ENCODE measurements at regions of chr15 and their contacts with region 1.

Region 1: GRCh38 chr15:59104912-59105732 is at the start of gene CCNB2:
- DNase-seq: peak; percentile 85
- ATAC-seq: peak; percentile 100
- H3K4me3 ChIP-seq: peak within 1 kb of the TSS; percentile 95
- H3K27ac ChIP-seq: peak within 1 kb of the TSS; percentile 86
- H3K4me1 ChIP-seq: peaks cover 4% of the 10 kb centered on the region; the same call in 1 of the 2 replicates
- H3K27me3 ChIP-seq: no peaks in the 10 kb centered on the region
- CTCF ChIP-seq: no peak
- EP300 ChIP-seq: no peak
- POLR2A ChIP-seq: peak; percentile 98
- RAD21 ChIP-seq: no peak
- polyA plus RNA-seq, gene CCNB2: 205 to 211 TPM

Region 2: GRCh38 chr15:58957101-58957973 is 147.8 kb before region 1 on chr15:
- CTCF ChIA-PET with region 1: interaction called, 13 read pairs
- POLR2A ChIA-PET with region 1: no interaction called
- RAD21 ChIA-PET with region 1: no interaction called
- SMC1A ChIA-PET with region 1: no interaction called
- in situ Hi-C with region 1: no loop called
- intact Hi-C with region 1: no loop called
- DNase-seq: no peak
- ATAC-seq: peak; percentile 98
- H3K4me3 ChIP-seq: no peak overlapping the region
- H3K27ac ChIP-seq: no peak overlapping the region
- H3K4me1 ChIP-seq: peaks cover 11% of the 10 kb centered on the region
- H3K27me3 ChIP-seq: no peaks in the 10 kb centered on the region
- CTCF ChIP-seq: peak; percentile 79 to 87 (median 81)
- EP300 ChIP-seq: no peak
- POLR2A ChIP-seq: no peak
- RAD21 ChIP-seq: peak; percentile 82

Region 3: DNA sequence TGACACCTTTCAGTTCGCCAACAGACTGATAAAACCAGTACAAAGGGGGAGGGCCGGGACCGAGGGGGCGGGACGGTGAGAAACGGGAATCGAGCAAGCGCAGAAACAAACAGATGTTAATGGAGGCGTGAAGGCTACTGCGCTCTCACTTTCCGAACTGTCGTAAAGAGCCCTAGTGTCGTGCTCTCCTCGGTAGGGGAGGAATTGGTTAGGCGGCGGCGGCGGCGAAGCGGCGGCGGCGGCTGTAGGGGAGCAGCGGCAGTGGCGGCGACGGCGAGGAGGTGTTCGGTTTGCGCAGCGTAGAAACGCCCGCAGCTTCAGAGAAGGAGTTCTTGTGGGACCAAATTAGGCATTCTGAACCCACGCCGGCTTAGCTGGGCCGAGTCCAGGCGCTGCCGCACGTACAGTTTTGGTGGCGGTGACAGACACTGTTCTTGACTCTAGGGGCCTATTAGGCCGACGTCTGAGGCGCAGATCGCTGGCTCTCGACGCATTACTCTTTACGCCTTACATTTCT is 117.6 kb before region 1 on chr15 and contains the start of gene RNF111:
- CTCF ChIA-PET with region 1: no interaction called
- POLR2A ChIA-PET with region 1: no interaction called
- RAD21 ChIA-PET with region 1: interaction called, 3 read pairs
- SMC1A ChIA-PET with region 1: interaction called, 4 read pairs
- in situ Hi-C with region 1: no loop called
- intact Hi-C with region 1: loop called (anchors 2 kb)
- DNase-seq: peak; percentile 90
- ATAC-seq: peak; percentile 90
- H3K4me3 ChIP-seq: peak within 1 kb of the TSS; percentile 75
- H3K27ac ChIP-seq: peak within 1 kb of the TSS; percentile 92
- H3K4me1 ChIP-seq: no peaks in the 10 kb centered on the region
- H3K27me3 ChIP-seq: no peaks in the 10 kb centered on the region
- CTCF ChIP-seq: no peak
- EP300 ChIP-seq: no peak
- POLR2A ChIP-seq: peak; percentile 76
- RAD21 ChIP-seq: no peak
- polyA plus RNA-seq, gene RNF111: 8.6 TPM

Region 4: DNA sequence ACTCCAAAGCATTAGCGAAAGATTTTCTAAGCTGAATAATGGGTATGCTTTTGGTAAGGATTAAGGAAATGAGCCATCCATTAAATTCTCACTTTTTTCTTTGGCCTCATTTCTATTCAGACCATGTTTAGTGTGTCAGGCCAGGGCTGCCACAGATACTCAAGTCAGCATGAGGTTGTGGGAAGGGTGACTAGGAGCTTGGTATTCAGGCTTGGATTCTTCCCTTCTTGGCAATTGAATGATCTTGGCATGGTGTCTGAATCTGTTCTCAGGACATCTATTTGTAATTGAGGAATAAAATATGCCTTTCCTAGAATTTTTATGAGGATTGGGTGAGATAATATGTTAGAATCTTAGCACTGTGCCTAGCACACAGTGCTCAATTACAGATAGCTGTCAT is 11.0 kb after region 1 on chr15:
- CTCF ChIA-PET with region 1: interaction called, 7 read pairs
- POLR2A ChIA-PET with region 1: interaction called, 5 read pairs
- RAD21 ChIA-PET with region 1: no interaction called
- SMC1A ChIA-PET with region 1: interaction called, 11 read pairs
- in situ Hi-C with region 1: no loop called
- intact Hi-C with region 1: no loop called
- DNase-seq: no peak
- ATAC-seq: no peak
- H3K4me3 ChIP-seq: no peak overlapping the region
- H3K27ac ChIP-seq: no peak overlapping the region
- H3K4me1 ChIP-seq: no peaks in the 10 kb centered on the region
- H3K27me3 ChIP-seq: no peaks in the 10 kb centered on the region
- CTCF ChIP-seq: no peak
- EP300 ChIP-seq: no peak
- POLR2A ChIP-seq: no peak
- RAD21 ChIP-seq: no peak

Region 5: GRCh38 chr15:59124261-59124660 is 19.1 kb after region 1 on chr15:
- CTCF ChIA-PET with region 1: interaction called, 7 read pairs
- POLR2A ChIA-PET with region 1: interaction called, 3 read pairs
- RAD21 ChIA-PET with region 1: no interaction called
- SMC1A ChIA-PET with region 1: interaction called, 10 read pairs
- in situ Hi-C with region 1: no loop called
- intact Hi-C with region 1: no loop called
- DNase-seq: no peak
- ATAC-seq: no peak
- H3K4me3 ChIP-seq: no peak overlapping the region
- H3K27ac ChIP-seq: no peak overlapping the region
- H3K4me1 ChIP-seq: no peaks in the 10 kb centered on the region
- H3K27me3 ChIP-seq: no peaks in the 10 kb centered on the region
- CTCF ChIP-seq: no peak
- EP300 ChIP-seq: no peak
- POLR2A ChIP-seq: no peak
- RAD21 ChIP-seq: no peak

Region 6: DNA sequence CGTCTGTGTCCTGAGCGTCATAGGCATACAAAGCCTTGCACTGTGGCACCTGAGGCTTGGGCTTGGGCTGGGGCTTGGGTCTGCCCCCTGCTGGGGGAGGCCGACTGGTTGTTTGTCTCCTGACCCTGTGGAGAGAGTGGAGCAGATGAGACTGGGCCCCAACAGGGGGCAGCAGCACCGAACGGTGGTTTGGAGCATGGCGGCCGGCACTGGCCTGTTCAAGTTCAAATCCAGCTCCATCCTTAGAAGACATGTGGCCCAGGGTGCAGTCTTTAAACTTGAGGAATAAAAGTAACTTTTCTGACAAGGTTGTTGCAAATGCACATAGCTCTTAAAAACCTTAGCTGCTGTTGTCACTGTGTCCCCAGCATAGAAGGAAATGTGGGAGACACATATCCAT is 33.1 kb after region 1 on chr15:
- CTCF ChIA-PET with region 1: interaction called, 10 read pairs
- POLR2A ChIA-PET with region 1: no interaction called
- RAD21 ChIA-PET with region 1: interaction called, 5 read pairs
- SMC1A ChIA-PET with region 1: no interaction called
- in situ Hi-C with region 1: no loop called
- intact Hi-C with region 1: no loop called
- DNase-seq: no peak
- ATAC-seq: peak; percentile 96
- H3K4me3 ChIP-seq: no peak overlapping the region
- H3K27ac ChIP-seq: no peak overlapping the region
- H3K4me1 ChIP-seq: peaks cover 6% of the 10 kb centered on the region
- H3K27me3 ChIP-seq: no peaks in the 10 kb centered on the region
- CTCF ChIP-seq: peak; percentile 77 to 85 (median 83)
- EP300 ChIP-seq: no peak
- POLR2A ChIP-seq: 0 out of 2 replicates have a peak, but pooled peaks have one; percentile 0
- RAD21 ChIP-seq: peak; percentile 44; the same call in 1 of the 2 replicates

Region 7: GRCh38 chr15:59170295-59171066 is 65.4 kb after region 1 on chr15:
- CTCF ChIA-PET with region 1: no interaction called
- POLR2A ChIA-PET with region 1: no interaction called
- RAD21 ChIA-PET with region 1: no interaction called
- SMC1A ChIA-PET with region 1: no interaction called
- in situ Hi-C with region 1: no loop called
- intact Hi-C with region 1: no loop called
- DNase-seq: no peak
- ATAC-seq: no peak
- H3K4me3 ChIP-seq: no peak overlapping the region
- H3K27ac ChIP-seq: no peak overlapping the region
- H3K4me1 ChIP-seq: peaks cover 3% of the 10 kb centered on the region; the same call in 1 of the 2 replicates
- H3K27me3 ChIP-seq: no peaks in the 10 kb centered on the region
- CTCF ChIP-seq: no peak
- EP300 ChIP-seq: no peak
- POLR2A ChIP-seq: no peak; the same call in 1 of the 2 replicates
- RAD21 ChIP-seq: no peak